ENCODE measurements at regions of chr22 and their contacts with region 1.

Region 1: GRCh38 chr22:18031695-18032454 is 7.5 kb upstream of the MICAL3 start:
- DNase-seq: peak; percentile 97
- H3K4me3 ChIP-seq: peak overlapping the region in 1 of 3 experiments; percentile 11
- H3K27ac ChIP-seq: peak overlapping the region; percentile 98
- H3K4me1 ChIP-seq: peaks cover 48% of the 10 kb centered on the region
- H3K27me3 ChIP-seq: no peaks in the 10 kb centered on the region
- CTCF ChIP-seq: no peak

Region 2: GRCh38 chr22:18012531-18012930 is 19.3 kb before region 1 on chr22:
- CTCF ChIA-PET with region 1: no interaction called
- dilution Hi-C with region 1: no loop called
- in situ Hi-C with region 1: no loop called
- intact Hi-C with region 1: loop called (anchors 1 kb)
- DNase-seq: peak; percentile 82
- H3K4me3 ChIP-seq: no peak overlapping the region
- H3K27ac ChIP-seq: no peak overlapping the region
- H3K4me1 ChIP-seq: peaks cover 20% of the 10 kb centered on the region
- H3K27me3 ChIP-seq: no peaks in the 10 kb centered on the region
- CTCF ChIP-seq: no peak

Region 3: DNA sequence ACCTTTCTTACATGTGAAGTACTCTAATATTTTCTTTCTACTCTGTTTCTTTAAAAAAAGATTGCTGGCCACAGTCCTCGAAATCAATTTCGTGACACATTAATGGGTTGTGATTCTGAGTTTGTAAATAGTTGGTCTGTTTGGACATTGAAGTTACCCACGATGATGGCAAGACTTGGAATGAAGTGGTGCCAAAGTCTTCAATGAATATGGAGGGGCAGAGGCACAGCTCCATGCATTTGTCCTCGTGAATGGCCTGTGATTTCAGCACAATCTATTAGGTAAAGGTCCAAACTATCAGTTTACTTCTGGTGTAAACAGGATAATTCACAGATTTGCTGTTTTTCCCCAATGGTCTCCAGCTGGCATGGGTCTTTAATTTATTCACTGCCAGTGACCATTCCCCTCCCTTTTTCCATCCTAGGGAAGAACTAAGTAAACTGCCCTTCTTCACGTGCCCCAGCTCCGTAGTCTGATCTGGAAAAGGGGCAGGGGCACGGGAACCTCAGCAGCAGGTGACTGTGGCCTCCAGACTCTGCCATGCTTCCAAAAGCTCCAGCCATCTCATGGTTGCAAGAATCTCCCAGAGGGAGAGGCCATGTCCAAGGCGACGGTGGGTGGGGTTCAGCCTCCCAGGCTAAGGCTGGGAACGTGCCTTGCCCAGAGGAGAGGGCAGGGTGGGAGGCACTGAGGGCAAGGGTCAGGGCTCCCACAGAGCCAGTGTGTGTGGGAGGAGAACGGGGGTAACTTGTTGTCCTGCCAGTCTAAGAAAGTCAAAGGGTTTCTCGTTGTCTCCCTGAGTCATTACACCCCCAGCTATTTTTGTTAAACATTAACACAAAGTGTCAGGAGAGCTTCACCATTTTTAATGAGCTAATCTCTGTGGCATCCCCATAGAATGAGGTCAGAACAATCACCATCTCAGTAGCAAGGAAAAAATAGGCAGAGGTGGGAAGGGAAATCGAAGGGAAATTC is 29.1 kb after region 1 on chr22:
- CTCF ChIA-PET with region 1: no interaction called
- dilution Hi-C with region 1: no loop called
- in situ Hi-C with region 1: no loop called
- intact Hi-C with region 1: loop called (anchors 1 kb)
- DNase-seq: peak; percentile 90
- H3K4me3 ChIP-seq: no peak overlapping the region
- H3K27ac ChIP-seq: peak overlapping the region; percentile 57
- H3K4me1 ChIP-seq: peaks cover 70% of the 10 kb centered on the region
- H3K27me3 ChIP-seq: no peaks in the 10 kb centered on the region
- CTCF ChIP-seq: no peak

Region 4: DNA sequence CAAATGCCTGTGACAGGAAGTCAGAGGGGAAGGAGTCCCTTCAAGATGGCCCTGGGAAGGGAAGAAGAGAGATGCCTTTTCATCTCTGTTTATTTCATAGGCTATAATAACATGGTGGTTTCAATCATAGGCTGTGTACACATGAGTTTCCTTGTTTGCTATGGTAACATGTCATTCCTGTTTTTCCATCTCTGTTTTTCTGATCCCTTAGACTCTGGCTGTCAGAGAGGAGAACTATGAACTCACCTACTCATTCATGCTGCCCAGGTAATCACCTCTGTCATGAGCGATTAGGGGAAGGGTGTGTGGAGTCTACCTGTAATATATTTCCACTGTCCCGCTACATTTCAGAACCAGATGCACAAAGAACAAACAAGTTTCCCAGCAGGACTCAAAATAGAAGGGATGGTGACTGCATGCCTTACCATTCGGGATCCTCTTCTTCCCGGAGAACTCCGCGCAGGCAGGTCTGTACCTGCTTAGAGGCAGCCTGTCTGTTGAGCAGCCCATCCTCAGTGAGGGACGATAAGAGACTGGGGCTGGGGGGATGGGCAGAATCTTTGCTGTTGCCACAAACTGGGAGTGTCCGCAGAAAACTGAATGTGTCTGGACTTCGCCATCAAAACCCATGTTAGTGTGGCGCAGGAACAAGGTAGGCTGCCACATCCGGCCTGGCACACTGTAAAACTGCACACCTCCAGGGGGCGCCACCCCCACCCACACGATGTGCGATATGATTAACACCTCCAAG is 38.9 kb after region 1 on chr22:
- CTCF ChIA-PET with region 1: interaction called, 5 read pairs
- dilution Hi-C with region 1: no loop called
- in situ Hi-C with region 1: loop called in 1 of 2 experiments (anchors 5 kb)
- intact Hi-C with region 1: loop called (anchors 2 kb)
- DNase-seq: peak; percentile 79
- H3K4me3 ChIP-seq: no peak overlapping the region
- H3K27ac ChIP-seq: peak overlapping the region; percentile 44
- H3K4me1 ChIP-seq: peaks cover 29% of the 10 kb centered on the region
- H3K27me3 ChIP-seq: no peaks in the 10 kb centered on the region
- CTCF ChIP-seq: peak; percentile 61 to 68

Measured in mammary epithelial cell (primary cell).